ENCODE measurements at regions of chr2 and their contacts with region 1.

Region 1: DNA sequence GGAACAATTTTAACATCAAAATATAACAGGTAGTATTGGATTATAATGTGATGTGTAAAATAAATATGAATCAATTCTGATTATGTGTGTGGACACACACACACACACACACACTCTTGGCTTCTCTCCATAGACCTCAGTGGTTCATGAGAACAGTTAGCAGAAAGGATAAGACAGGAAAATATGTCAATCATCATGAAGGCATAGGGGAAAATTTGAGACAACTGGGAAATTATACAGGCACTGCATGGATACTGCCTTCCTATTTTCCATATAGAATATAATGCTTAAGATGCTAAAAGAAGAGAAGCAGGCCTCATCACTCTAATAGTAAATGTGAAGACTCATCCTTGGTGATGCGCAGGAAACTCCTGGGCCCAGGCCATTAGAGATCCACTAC is 884.5 kb downstream of the SUCLG1 start:
- DNase-seq: no peak

Region 2: GRCh38 chr2:82307510-82307909 is 1267.1 kb before region 1 on chr2:
- intact Hi-C with region 1: no loop called
- DNase-seq: no peak

Region 3: DNA sequence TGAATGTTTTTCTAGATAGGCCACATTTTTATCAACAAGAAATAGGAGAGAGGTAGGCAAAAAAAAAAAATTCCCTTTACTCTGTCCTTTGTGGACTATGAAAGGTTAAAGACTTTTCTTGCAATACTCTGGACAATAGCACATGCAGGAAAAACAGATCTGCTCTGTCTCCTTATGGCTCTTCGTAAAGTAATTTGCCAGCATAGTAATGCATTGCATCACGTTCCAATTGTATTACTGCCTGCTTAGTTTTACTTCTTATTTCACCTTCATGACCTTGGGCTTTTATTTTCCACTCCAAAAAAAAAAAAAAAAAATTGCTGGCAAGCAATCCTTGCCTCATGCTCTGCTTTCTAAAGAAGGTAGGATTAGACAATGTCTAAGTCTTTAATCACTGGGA is 918.2 kb before region 1 on chr2:
- intact Hi-C with region 1: no loop called
- DNase-seq: no peak

Region 4: GRCh38 chr2:83291083-83291482 is 283.5 kb before region 1 on chr2:
- intact Hi-C with region 1: no loop called
- DNase-seq: no peak

Region 5: GRCh38 chr2:83584672-83585071 is 10.1 kb after region 1 on chr2:
- intact Hi-C with region 1: loop called in 1 of 2 experiments (anchors 1 kb)
- DNase-seq: no peak